Activated CD4-positive, alpha-beta T cell treated with anti-CD3 and anti-CD28 coated beads for 36 hours (primary cell): ENCODE measurements at regions of chr13 and their contacts with region 1.

Region 1: DNA sequence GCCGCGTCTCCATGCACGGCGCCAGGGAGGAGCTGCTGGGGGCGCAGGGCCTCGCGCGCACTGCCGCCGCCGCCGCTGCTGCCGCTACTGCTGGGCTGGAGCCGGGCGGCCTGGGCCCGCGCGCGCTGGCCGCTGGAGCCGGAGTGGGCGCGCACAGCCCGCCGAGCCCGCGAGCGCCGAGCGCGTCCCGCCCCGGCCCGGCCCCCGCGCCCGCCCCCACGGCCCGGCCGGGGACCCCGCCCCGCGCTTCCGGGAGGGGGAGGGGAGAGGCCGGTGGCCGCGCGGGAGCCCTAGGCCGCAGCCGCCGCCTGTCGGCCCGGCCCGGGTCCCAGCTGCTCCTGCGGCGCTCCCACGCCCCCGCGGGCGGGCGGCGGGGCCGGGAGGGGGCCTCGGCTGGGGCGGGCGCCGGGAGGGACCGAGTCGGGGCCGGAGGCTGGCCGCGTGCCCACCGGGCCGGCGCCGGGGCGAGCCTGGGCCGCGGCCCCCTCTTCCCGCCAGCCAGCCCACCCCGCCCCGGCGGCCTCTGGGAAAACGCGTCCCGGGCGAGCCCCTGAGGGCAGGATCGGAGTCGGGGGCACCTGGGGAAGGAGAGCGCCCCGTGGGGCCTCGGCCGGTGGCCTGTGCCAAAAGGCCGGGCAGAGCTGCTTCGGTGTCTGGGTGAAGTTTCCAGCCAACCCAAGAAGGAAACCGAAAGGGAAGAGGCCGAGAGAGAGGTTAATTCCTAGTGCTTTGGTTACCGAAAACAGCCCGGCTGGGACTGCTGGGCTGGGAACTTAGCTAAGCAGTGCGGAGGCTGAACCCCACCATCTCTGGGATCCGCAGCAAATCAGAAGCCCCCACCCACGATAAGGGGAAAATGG is at the start of gene STK24:
- DNase-seq: peak; percentile 75
- ATAC-seq: peak; percentile 42
- H3K4me3 Mint-ChIP-seq: peak within 1 kb of the TSS; percentile 95
- H3K27ac Mint-ChIP-seq: peak within 1 kb of the TSS; percentile 76
- H3K4me1 Mint-ChIP-seq: peaks cover 39% of the 10 kb centered on the region
- H3K27me3 Mint-ChIP-seq: no peaks in the 10 kb centered on the region
- total RNA-seq, gene STK24: 146 to 173 TPM

Region 2: GRCh38 chr13:97221989-97222700 is 1355.0 kb before region 1 on chr13 and contains the start of gene MBNL2:
- CTCF ChIA-PET with region 1: no interaction called
- POLR2A ChIA-PET with region 1: no interaction called
- intact Hi-C with region 1: loop called in 1 of 2 experiments (anchors 10 kb)
- DNase-seq: peak; percentile 93
- ATAC-seq: peak; percentile 98
- H3K4me3 Mint-ChIP-seq: peak within 1 kb of the TSS; percentile 80
- H3K27ac Mint-ChIP-seq: peak within 1 kb of the TSS; percentile 95
- H3K4me1 Mint-ChIP-seq: peaks cover 31% of the 10 kb centered on the region
- H3K27me3 Mint-ChIP-seq: no peaks in the 10 kb centered on the region
- total RNA-seq, gene MBNL2: 16.7 to 24.5 TPM

Region 3: GRCh38 chr13:98476538-98476966 is 100.6 kb before region 1 on chr13:
- CTCF ChIA-PET with region 1: interaction called, 3 read pairs
- POLR2A ChIA-PET with region 1: interaction called, 6 read pairs
- intact Hi-C with region 1: loop called (anchors 1 to 2 kb)
- DNase-seq: peak; percentile 94
- ATAC-seq: peak; percentile 86
- H3K4me3 Mint-ChIP-seq: peak overlapping the region; percentile 63
- H3K27ac Mint-ChIP-seq: peak overlapping the region; percentile 93
- H3K4me1 Mint-ChIP-seq: peaks cover 56% of the 10 kb centered on the region
- H3K27me3 Mint-ChIP-seq: no peaks in the 10 kb centered on the region

Region 4: GRCh38 chr13:98528663-98529570 is 48.3 kb before region 1 on chr13:
- CTCF ChIA-PET with region 1: interaction called, 4 read pairs
- POLR2A ChIA-PET with region 1: interaction called, 3 read pairs
- intact Hi-C with region 1: loop called in 1 of 2 experiments (anchors 1 kb)
- DNase-seq: peak; percentile 55
- ATAC-seq: peak; percentile 80
- H3K4me3 Mint-ChIP-seq: peak overlapping the region; percentile 29
- H3K27ac Mint-ChIP-seq: peak overlapping the region; percentile 87
- H3K4me1 Mint-ChIP-seq: peaks cover 93% of the 10 kb centered on the region
- H3K27me3 Mint-ChIP-seq: no peaks in the 10 kb centered on the region

Region 5: GRCh38 chr13:98653463-98653985 is 76.3 kb after region 1 on chr13:
- CTCF ChIA-PET with region 1: interaction called, 15 read pairs
- POLR2A ChIA-PET with region 1: no interaction called
- intact Hi-C with region 1: loop called in 1 of 2 experiments (anchors 2 kb)
- DNase-seq: peak; percentile 86
- ATAC-seq: peak; percentile 100
- H3K4me3 Mint-ChIP-seq: no peak overlapping the region
- H3K27ac Mint-ChIP-seq: peak overlapping the region; percentile 65
- H3K4me1 Mint-ChIP-seq: peaks cover 2% of the 10 kb centered on the region
- H3K27me3 Mint-ChIP-seq: peaks cover 2% of the 10 kb centered on the region

Region 6: GRCh38 chr13:99087096-99087953 is 510.1 kb after region 1 on chr13:
- CTCF ChIA-PET with region 1: no interaction called
- POLR2A ChIA-PET with region 1: no interaction called
- intact Hi-C with region 1: loop called in 1 of 2 experiments (anchors 5 kb)
- DNase-seq: peak; percentile 96
- ATAC-seq: peak; percentile 89
- H3K4me3 Mint-ChIP-seq: peak overlapping the region; percentile 89
- H3K27ac Mint-ChIP-seq: peak overlapping the region; percentile 95
- H3K4me1 Mint-ChIP-seq: peaks cover 31% of the 10 kb centered on the region
- H3K27me3 Mint-ChIP-seq: no peaks in the 10 kb centered on the region

Region 7: DNA sequence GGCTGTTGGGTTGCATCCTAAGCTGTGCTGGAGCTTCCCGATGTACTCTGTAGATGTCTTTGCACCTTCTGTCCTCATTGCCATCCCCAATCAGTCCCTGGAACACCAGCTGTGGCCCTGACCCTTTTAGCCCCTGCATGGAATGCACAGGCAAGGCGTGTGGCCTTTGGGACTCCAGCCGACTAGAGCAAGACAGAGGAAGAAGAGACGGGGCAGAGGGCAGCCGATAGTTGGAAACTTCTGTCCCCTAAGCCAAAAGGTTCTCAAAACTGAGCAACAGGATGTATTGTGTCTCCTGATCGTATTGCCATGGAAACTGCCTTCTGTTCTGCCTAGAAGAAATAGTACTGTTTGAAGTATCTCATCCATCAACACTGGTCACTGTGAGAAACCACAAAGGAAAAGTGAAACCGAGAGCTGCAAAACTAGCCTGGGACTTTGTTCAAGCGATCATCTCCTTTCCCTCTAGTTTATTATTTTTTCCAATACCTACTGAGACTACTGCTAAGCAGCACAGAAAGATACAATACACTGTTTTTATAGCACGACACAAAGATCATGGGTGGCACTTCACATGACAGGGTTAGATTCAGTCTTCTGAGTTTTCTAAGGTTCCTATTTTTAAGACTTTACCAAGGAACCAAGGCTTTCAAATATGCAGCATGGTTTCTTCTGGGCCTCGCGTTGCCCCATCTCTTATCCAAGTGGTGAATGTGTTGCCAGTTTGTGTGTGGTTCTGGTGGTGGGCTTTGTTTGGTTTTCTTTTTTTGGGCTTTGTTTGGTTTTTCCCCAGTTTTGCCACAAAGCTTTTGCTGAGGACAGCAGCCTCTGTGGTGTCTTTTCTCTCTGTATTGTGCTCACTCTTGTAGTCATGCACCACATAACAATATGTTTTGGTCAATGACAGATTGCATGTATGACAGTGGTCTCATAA is 779.2 kb after region 1 on chr13:
- CTCF ChIA-PET with region 1: no interaction called
- POLR2A ChIA-PET with region 1: no interaction called
- intact Hi-C with region 1: loop called in 1 of 2 experiments (anchors 10 kb)
- DNase-seq: peak; percentile 48
- ATAC-seq: peak; percentile 25
- H3K4me3 Mint-ChIP-seq: peak overlapping the region; percentile 42
- H3K27ac Mint-ChIP-seq: peak overlapping the region; percentile 92
- H3K4me1 Mint-ChIP-seq: peaks cover 99% of the 10 kb centered on the region
- H3K27me3 Mint-ChIP-seq: no peaks in the 10 kb centered on the region